ENCODE measurements at regions of chr5 and their contacts with region 1.

Region 1: GRCh38 chr5:139787568-139788293 is 7.9 kb upstream of the PSD2 start:
- DNase-seq: peak; percentile 69
- H3K4me3 ChIP-seq: peak overlapping the region; percentile 50 to 79 (median 60)
- H3K27ac ChIP-seq: peak overlapping the region; percentile 34
- H3K4me1 ChIP-seq: peaks cover 8% of the 10 kb centered on the region
- H3K27me3 ChIP-seq: no peaks in the 10 kb centered on the region
- CTCF ChIP-seq: peak; percentile 65 to 95

Region 2: DNA sequence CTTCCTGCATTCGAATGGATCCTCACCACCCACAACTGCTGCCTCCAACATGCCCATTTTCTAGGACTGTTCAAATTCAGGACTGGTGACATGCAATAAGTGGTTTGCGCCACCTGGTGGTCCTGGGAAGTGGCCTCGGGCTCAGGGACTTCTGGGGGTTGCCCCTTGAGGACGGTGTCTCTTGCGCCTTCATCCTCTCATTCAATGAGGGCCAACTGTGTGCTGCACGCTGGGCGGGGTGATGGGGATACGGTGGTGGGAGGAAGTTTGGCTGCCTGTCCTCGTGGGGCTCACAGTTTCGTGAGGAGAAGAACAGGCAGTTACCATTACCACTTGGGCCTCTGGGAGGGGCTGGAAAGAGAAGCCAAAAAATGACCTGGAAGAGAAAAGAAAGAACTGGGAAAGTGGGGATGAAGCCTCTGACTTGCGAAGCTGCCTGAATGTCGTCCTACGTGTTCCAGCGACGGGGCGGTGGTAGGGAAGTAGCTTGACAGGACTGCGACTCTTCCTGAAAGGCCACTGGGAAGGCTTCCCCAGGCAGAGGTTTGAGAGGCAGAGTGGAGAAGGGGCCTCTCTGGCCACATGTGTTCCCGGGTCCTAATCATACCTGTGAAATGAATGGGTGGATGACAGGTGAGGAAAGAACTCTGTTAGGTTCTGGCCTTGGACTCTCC is 56.9 kb after region 1 on chr5:
- CTCF ChIA-PET with region 1: interaction called, 4 read pairs
- dilution Hi-C with region 1: no loop called
- in situ Hi-C with region 1: loop called (anchors 10 kb)
- intact Hi-C with region 1: loop called (anchors 1 kb)
- DNase-seq: peak; percentile 41
- H3K4me3 ChIP-seq: no peak overlapping the region
- H3K27ac ChIP-seq: no peak overlapping the region
- H3K4me1 ChIP-seq: no peaks in the 10 kb centered on the region
- H3K27me3 ChIP-seq: no peaks in the 10 kb centered on the region
- CTCF ChIP-seq: peak; percentile 75 to 80

Region 3: DNA sequence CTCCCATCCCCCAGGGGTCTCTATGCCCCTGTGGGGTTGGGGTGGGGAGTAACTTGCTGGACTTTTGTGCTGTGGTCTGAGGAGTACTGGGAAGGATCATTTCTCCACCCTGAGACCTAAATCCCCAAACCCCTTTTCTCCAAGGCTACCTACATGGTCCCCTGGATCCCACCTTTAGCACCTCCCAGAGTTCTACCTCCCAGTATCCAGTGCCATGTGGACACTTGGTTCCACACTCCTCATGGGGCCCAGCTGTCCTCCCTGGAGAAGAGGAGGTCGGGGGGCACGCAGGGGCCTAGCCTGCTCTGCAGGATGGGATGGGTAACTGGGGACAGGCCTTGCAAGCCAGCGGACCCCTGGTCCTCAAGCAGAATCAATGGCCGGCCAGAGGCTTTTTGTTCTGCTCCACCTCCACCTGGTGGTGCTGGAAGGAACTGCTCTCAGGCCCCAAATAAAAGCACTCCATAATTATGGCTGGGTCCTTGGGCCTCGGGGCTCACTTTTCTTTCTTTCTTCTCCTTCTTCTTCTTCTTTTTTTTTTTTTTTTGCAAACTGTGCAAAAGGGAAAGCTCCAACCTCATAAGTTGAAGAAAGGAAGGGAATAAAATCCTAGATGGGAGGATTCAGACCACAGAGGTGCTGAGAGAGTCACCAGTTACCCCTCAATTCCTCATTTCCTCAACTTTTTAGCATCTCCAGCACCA is 76.3 kb after region 1 on chr5:
- CTCF ChIA-PET with region 1: no interaction called
- dilution Hi-C with region 1: loop called (anchors 5 kb)
- in situ Hi-C with region 1: loop called in 1 of 2 experiments (anchors 5 kb)
- intact Hi-C with region 1: loop called (anchors 1 kb)
- DNase-seq: peak; percentile 12
- H3K4me3 ChIP-seq: no peak overlapping the region
- H3K27ac ChIP-seq: no peak overlapping the region
- H3K4me1 ChIP-seq: peaks cover 10% of the 10 kb centered on the region
- H3K27me3 ChIP-seq: no peaks in the 10 kb centered on the region
- CTCF ChIP-seq: peak; percentile 82 to 92

Region 4: DNA sequence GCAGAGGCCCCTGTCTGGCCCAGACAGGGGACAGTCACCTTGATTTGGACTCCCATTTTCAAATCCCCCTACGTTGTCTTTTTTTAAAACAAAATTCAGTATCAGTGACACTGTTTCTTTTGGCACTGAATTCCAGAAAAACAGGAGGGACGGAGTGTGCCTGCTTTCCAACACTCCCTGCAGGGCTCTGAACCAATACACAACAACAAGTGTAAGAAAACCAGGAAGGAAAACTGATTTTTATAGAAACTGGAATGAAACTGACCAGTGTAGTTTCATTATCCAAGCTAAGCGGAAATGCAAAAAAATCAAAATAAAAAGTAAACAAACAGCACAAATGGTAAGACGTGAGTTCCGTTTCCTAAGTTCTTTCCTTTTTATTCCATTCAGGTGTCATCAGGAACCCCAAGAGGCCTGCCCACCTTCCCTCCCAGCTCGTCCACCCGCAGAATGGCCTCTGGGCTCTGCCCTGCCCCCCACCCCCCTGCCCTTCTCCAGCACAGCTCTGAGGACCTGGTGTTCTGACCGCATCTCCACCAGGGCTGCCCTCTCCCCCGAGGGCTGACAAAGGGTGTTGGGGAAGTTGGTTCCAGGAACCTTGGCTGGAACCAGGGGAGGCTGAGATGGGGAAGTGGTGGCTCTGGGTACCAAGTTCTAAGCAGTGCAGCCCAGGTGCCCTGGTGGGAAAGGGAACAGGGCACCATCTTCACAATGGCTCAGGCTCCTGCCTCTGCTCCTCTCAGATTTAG is 81.5 kb after region 1 on chr5:
- CTCF ChIA-PET with region 1: no interaction called
- dilution Hi-C with region 1: loop called (anchors 5 kb)
- in situ Hi-C with region 1: loop called in 1 of 2 experiments (anchors 5 kb)
- intact Hi-C with region 1: loop called (anchors 1 kb)
- DNase-seq: no peak
- H3K4me3 ChIP-seq: no peak overlapping the region
- H3K27ac ChIP-seq: no peak overlapping the region
- H3K4me1 ChIP-seq: no peaks in the 10 kb centered on the region
- H3K27me3 ChIP-seq: no peaks in the 10 kb centered on the region
- CTCF ChIP-seq: no peak

Region 5: GRCh38 chr5:140157032-140157803 is 369.5 kb after region 1 on chr5:
- CTCF ChIA-PET with region 1: no interaction called
- dilution Hi-C with region 1: no loop called
- in situ Hi-C with region 1: loop called (anchors 25 kb)
- intact Hi-C with region 1: loop called (anchors 1 kb)
- DNase-seq: peak; percentile 66
- H3K4me3 ChIP-seq: peak overlapping the region in 2 of 3 experiments; percentile 23 to 41
- H3K27ac ChIP-seq: peak overlapping the region; percentile 9
- H3K4me1 ChIP-seq: peaks cover 8% of the 10 kb centered on the region
- H3K27me3 ChIP-seq: no peaks in the 10 kb centered on the region
- CTCF ChIP-seq: peak; percentile 73 to 90